Psoas muscle (tissue), 8 donors: ENCODE measurements at regions of chr18 and their contacts with region 1.

Region 1: GRCh38 chr18:23377669-23378301 is 75.3 kb upstream of the RIOK3 start:
- DNase-seq: no peak
- ATAC-seq: peak in 1 of 4 donors; percentile 53
- H3K4me3 ChIP-seq: no peak overlapping the region
- H3K27ac ChIP-seq: no peak overlapping the region
- H3K4me1 ChIP-seq: peaks cover 4% of the 10 kb centered on the region
- H3K27me3 ChIP-seq: no peaks in the 10 kb centered on the region
- CTCF ChIP-seq: no peak

Region 2: DNA sequence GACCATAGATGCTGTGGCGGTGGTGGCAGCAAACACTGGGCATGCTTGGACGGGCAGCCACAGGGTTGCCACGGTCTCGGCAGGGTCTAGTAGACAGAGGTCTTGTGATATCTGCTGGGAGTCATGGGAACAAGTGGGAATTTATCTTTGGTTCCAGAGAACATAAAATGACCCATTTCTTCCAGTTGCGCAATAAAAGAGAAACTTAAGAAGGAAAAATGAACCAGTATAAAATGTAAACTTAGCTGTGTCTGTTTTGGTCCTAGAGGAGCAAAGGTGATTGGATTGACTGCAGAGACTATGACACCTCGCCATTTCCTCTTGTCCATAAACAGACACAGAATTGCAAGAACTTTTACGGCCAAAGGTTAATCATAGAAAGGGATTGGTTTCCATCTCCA is 577.2 kb before region 1 on chr18:
- intact Hi-C with region 1: loop called in 1 of 2 experiments (anchors 10 kb)
- DNase-seq: peak in 1 of 2 donors; percentile 13
- ATAC-seq: peak in 1 of 4 donors; percentile 35
- H3K4me3 ChIP-seq: no peak overlapping the region
- H3K27ac ChIP-seq: no peak overlapping the region
- H3K4me1 ChIP-seq: no peaks in the 10 kb centered on the region
- H3K27me3 ChIP-seq: no peaks in the 10 kb centered on the region
- CTCF ChIP-seq: no peak

Region 3: DNA sequence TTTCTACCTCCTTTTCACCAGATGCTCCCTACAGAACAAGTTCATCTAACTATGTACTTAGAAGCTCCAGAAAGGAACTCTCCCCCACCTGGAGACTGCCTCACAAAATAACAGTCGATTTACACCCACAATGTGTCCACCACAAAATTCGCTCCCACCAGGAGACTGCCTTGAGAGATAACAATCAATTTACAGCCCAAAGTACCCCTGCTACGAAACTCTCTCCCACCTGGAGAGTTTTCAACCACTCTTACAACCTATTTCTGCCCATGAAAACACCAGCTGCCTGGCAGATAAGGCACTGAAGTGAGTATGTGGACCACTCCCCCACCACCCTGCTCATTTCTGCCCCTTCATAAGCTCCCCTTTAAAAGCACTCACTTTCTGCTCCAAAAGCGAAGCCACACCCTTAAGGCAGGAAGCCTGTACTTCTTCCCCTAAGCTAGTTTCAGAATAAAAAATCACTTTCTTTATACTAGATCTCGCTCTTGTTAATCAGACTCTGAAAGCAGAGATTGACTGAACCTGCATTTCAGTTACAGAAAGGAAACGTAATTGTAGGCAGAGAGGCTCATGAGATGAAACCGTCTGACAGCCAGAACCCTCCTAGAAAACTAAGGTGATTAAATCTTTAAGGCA is 539.0 kb before region 1 on chr18:
- intact Hi-C with region 1: no loop called
- DNase-seq: no peak
- ATAC-seq: no peak
- H3K4me3 ChIP-seq: no peak overlapping the region
- H3K27ac ChIP-seq: no peak overlapping the region
- H3K4me1 ChIP-seq: no peaks in the 10 kb centered on the region
- H3K27me3 ChIP-seq: no peaks in the 10 kb centered on the region
- CTCF ChIP-seq: no peak

Region 4: DNA sequence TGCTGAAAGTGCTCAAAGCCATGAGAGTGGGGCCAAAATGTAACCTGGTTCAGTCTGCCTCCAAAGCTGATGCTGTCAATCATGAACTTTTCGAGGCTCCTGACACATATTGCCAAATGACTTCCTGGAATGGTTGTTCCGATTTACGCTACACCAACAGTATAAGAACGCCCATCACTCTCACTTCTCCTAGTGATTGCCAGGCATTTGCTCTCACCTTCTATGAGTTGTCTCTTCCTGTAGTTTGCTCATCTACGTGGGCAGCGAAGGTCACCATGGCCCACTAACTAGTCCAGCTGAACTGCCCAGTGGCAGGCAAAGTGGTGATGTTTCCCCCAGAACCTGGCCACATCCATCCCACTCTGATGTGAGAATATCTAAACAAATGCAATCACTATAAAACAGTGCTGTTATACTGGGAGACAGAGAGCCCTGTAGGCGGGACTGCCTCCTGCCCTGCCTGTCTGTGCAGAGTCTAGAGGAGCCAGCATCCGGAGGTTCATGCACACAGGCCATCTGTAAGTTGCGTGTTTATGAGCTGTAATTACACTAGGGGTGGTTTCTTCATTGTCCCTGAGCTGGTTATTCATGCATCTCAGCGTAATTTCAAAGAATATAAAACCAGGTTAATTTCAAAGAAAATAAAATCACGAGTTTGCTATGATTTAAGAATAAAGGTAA is 251.3 kb before region 1 on chr18:
- intact Hi-C with region 1: loop called (anchors 5 to 10 kb)
- DNase-seq: no peak
- ATAC-seq: no peak
- H3K4me3 ChIP-seq: no peak overlapping the region
- H3K27ac ChIP-seq: no peak overlapping the region
- H3K4me1 ChIP-seq: no peaks in the 10 kb centered on the region
- H3K27me3 ChIP-seq: no peaks in the 10 kb centered on the region
- CTCF ChIP-seq: no peak

Region 5: GRCh38 chr18:23487738-23488570 is 110.2 kb after region 1 on chr18:
- intact Hi-C with region 1: no loop called
- DNase-seq: no peak
- ATAC-seq: no peak
- H3K4me3 ChIP-seq: no peak overlapping the region
- H3K27ac ChIP-seq: no peak overlapping the region
- H3K4me1 ChIP-seq: no peaks in the 10 kb centered on the region
- H3K27me3 ChIP-seq: no peaks in the 10 kb centered on the region
- CTCF ChIP-seq: no peak